HepG2 (cell line): ENCODE measurements at regions of chr2 and their contacts with region 1.

Region 1: GRCh38 chr2:223930103-223930976 is 14.8 kb downstream of the WDFY1 start:
- DNase-seq: peak; percentile 97
- ATAC-seq: peak; percentile 96
- H3K4me3 ChIP-seq: peak overlapping the region; percentile 53 to 68 (median 64)
- H3K27ac ChIP-seq: peak overlapping the region; percentile 90
- H3K4me1 ChIP-seq: peaks cover 63% of the 10 kb centered on the region
- H3K27me3 ChIP-seq: no peaks in the 10 kb centered on the region; a peak in 1 of 5 replicates
- CTCF ChIP-seq: 0 out of 2 replicates have a peak, but pooled peaks have one; percentile 16
- EP300 ChIP-seq: no peak; a peak in 1 of 4 replicates
- POLR2A ChIP-seq: peak; percentile 65 to 89; a peak in 3 of 4 replicates
- RAD21 ChIP-seq: no peak; the same call in none of the 2 replicates

Region 2: DNA sequence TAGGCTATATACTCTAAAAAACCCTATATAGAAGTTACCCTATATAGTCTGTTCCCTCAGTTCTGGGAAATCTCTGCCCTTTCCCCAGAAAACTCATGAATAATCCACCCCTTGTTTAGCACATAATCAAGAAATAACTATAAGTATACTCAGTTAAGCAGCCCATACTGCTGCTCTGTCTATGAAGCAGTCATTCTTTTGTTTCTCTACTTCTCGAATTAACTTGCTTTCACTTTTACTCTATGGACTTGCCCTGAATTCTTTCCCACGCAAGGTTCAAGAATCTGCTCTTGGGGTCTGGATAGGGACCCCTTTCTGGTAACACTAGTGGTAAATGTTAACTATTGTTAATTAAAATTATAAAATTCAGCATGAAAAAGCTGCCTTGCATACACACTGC is 75.6 kb before region 1 on chr2:
- CTCF ChIA-PET with region 1: no interaction called
- POLR2A ChIA-PET with region 1: interaction called, 16 read pairs
- in situ Hi-C with region 1: no loop called
- intact Hi-C with region 1: no loop called
- DNase-seq: no peak
- ATAC-seq: no peak
- H3K4me3 ChIP-seq: no peak overlapping the region
- H3K27ac ChIP-seq: no peak overlapping the region
- H3K4me1 ChIP-seq: peaks cover 38% of the 10 kb centered on the region
- H3K27me3 ChIP-seq: no peaks in the 10 kb centered on the region
- CTCF ChIP-seq: no peak
- EP300 ChIP-seq: no peak
- POLR2A ChIP-seq: no peak
- RAD21 ChIP-seq: no peak

Region 3: GRCh38 chr2:223896833-223897311 is 33.5 kb before region 1 on chr2:
- CTCF ChIA-PET with region 1: no interaction called
- POLR2A ChIA-PET with region 1: interaction called, 12 read pairs
- in situ Hi-C with region 1: no loop called
- intact Hi-C with region 1: loop called (anchors 1 kb)
- DNase-seq: no peak
- ATAC-seq: no peak
- H3K4me3 ChIP-seq: no peak overlapping the region
- H3K27ac ChIP-seq: no peak overlapping the region
- H3K4me1 ChIP-seq: peaks cover 15% of the 10 kb centered on the region
- H3K27me3 ChIP-seq: no peaks in the 10 kb centered on the region
- CTCF ChIP-seq: no peak
- EP300 ChIP-seq: no peak
- POLR2A ChIP-seq: no peak
- RAD21 ChIP-seq: no peak

Region 4: GRCh38 chr2:223944703-223945531 is 14.6 kb after region 1 on chr2 and contains the start of gene WDFY1:
- CTCF ChIA-PET with region 1: no interaction called
- POLR2A ChIA-PET with region 1: interaction called, 69 read pairs
- in situ Hi-C with region 1: no loop called
- intact Hi-C with region 1: loop called (anchors 1 kb)
- DNase-seq: peak; percentile 75
- ATAC-seq: peak; percentile 95
- H3K4me3 ChIP-seq: peak within 1 kb of the TSS; percentile 80 to 100 (median 99)
- H3K27ac ChIP-seq: peak within 1 kb of the TSS; percentile 85
- H3K4me1 ChIP-seq: peaks cover 37% of the 10 kb centered on the region
- H3K27me3 ChIP-seq: no peaks in the 10 kb centered on the region; a peak in 1 of 5 replicates
- CTCF ChIP-seq: peak; percentile 24; the same call in 1 of the 2 replicates
- EP300 ChIP-seq: peak; percentile 69 to 77; a peak in 3 of 4 replicates
- POLR2A ChIP-seq: peak; percentile 90 to 95
- RAD21 ChIP-seq: peak; percentile 80
- total RNA-seq, gene WDFY1: 77.0 and 92.1 TPM in 2 replicates

Region 5: DNA sequence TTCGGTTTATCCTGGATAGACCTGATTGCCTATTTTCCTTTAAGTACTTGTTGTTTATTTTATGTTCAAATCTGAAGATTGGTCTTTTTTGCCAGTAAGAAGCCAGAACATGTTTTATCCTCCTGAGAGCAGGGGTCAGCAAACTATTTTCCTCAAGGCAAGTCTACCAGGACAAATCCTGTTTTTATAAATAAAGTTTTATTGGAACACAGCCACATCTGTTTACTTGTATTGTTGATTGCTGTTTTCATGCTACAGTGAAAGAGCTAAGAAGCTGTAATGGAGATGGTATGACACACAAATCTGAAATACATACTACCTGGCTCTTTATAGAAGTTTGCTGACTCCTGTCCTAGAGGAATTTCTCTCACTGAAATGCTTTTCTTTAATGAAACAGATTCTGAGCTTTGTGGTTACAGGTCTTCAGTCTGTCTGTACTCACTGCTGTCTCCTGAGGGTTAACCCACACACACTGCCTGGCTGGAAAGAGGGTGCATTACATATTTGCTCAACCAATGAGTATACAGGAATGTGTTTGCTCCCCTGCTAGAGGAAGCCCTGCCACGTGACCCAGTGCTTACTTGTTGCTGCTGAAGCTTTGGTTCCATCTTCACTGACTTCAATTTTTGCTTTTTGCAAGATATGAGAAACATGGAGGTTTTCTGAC is 49.5 kb after region 1 on chr2:
- CTCF ChIA-PET with region 1: no interaction called
- POLR2A ChIA-PET with region 1: no interaction called
- in situ Hi-C with region 1: no loop called
- intact Hi-C with region 1: no loop called
- DNase-seq: no peak
- ATAC-seq: peak; percentile 91
- H3K4me3 ChIP-seq: no peak overlapping the region
- H3K27ac ChIP-seq: no peak overlapping the region
- H3K4me1 ChIP-seq: 0 out of 2 replicates have a peak, but pooled peaks cover 8% of the 10 kb centered on the region
- H3K27me3 ChIP-seq: no peaks in the 10 kb centered on the region
- CTCF ChIP-seq: no peak
- EP300 ChIP-seq: no peak
- POLR2A ChIP-seq: no peak
- RAD21 ChIP-seq: no peak